Activated CD4-positive, alpha-beta memory T cell treated with anti-CD3 and anti-CD28 coated beads for 36 hours (primary cell): ENCODE measurements at regions of chr13 and their contacts with region 1.

Region 1: GRCh38 chr13:76903544-76904162 is 17.4 kb upstream of the KCTD12 start:
- DNase-seq: peak; percentile 77
- H3K4me3 Mint-ChIP-seq: no peak overlapping the region
- H3K27ac Mint-ChIP-seq: no peak overlapping the region
- H3K4me1 Mint-ChIP-seq: no peaks in the 10 kb centered on the region
- H3K27me3 Mint-ChIP-seq: peaks cover 8% of the 10 kb centered on the region

Region 2: DNA sequence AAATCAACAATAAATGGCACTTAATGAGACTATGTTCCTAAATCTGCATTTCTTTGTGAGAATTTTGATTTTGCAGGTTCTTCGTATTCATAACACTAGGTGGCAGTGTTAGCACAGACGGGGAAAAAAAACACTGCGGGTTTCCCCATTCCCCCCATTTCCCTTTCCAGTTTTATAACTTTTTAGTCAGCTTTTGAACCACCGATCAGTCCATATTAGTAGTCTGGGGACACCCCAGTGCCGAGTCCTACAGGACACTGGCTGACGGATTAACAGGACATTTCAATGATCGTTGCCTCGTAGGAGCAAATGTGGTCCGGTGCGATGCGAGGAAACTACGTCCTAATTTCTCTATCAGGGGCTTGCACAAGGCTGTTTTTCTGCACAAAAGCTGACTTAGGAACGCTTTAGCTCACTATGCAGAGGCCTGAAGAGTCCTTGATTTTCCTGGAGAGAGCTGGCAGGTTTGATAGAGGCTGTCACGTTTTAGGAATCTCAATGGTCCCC is 1033.2 kb before region 1 on chr13:
- CTCF ChIA-PET with region 1: interaction called, 23 read pairs
- POLR2A ChIA-PET with region 1: no interaction called
- intact Hi-C with region 1: no loop called
- DNase-seq: peak; percentile 15
- H3K4me3 Mint-ChIP-seq: peak overlapping the region; percentile 54
- H3K27ac Mint-ChIP-seq: no peak overlapping the region
- H3K4me1 Mint-ChIP-seq: peaks cover 20% of the 10 kb centered on the region
- H3K27me3 Mint-ChIP-seq: peaks cover 2% of the 10 kb centered on the region

Region 3: DNA sequence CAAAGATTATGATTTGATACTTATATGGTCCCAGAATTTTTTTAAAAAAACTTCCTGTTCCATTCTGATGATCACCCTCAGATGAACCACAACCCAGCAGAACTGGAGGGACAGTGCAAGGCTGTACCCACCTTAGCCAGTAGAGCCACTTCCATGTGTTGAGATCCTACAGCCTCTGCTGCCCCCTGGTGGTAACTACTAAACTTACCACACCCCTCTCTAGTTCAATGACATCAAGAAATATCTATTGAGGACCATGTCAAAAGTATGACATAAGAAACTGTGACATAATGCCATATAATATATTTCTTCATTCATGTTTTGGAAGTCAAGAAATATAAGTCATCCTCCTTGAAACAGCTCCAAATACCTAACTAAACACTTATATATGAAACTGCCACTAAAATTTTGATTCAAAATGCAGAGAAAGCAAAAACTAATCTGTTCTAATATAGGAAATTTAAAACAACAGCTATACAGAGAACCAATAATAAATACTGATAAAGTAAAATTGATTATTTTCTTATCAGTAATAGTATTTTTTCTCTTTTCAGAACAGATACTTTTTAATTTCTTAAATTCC is 430.0 kb before region 1 on chr13:
- CTCF ChIA-PET with region 1: interaction called, 5 read pairs
- POLR2A ChIA-PET with region 1: no interaction called
- intact Hi-C with region 1: loop called (anchors 1 kb)
- DNase-seq: peak; percentile 76
- H3K4me3 Mint-ChIP-seq: no peak overlapping the region
- H3K27ac Mint-ChIP-seq: no peak overlapping the region
- H3K4me1 Mint-ChIP-seq: no peaks in the 10 kb centered on the region
- H3K27me3 Mint-ChIP-seq: peaks cover 11% of the 10 kb centered on the region

Region 4: GRCh38 chr13:76822698-76823267 is 80.9 kb before region 1 on chr13:
- CTCF ChIA-PET with region 1: interaction called, 18 read pairs
- POLR2A ChIA-PET with region 1: no interaction called
- intact Hi-C with region 1: loop called (anchors 1 kb)
- DNase-seq: no peak
- H3K4me3 Mint-ChIP-seq: no peak overlapping the region
- H3K27ac Mint-ChIP-seq: no peak overlapping the region
- H3K4me1 Mint-ChIP-seq: no peaks in the 10 kb centered on the region
- H3K27me3 Mint-ChIP-seq: peaks cover 7% of the 10 kb centered on the region

Region 5: GRCh38 chr13:77026285-77026817 is 122.7 kb after region 1 on chr13:
- CTCF ChIA-PET with region 1: no interaction called
- POLR2A ChIA-PET with region 1: no interaction called
- intact Hi-C with region 1: no loop called
- DNase-seq: peak; percentile 86
- H3K4me3 Mint-ChIP-seq: peak overlapping the region; percentile 99
- H3K27ac Mint-ChIP-seq: peak overlapping the region; percentile 87
- H3K4me1 Mint-ChIP-seq: peaks cover 47% of the 10 kb centered on the region
- H3K27me3 Mint-ChIP-seq: no peaks in the 10 kb centered on the region